ENCODE measurements at regions of chr5 and their contacts with region 1.

Region 1: GRCh38 chr5:141734501-141735230 is 52.6 kb upstream of the ARAP3 start:
- DNase-seq: peak; percentile 2
- H3K4me3 Mint-ChIP-seq: no peak overlapping the region
- H3K27ac Mint-ChIP-seq: no peak overlapping the region
- H3K4me1 Mint-ChIP-seq: no peaks in the 10 kb centered on the region
- H3K27me3 Mint-ChIP-seq: peaks cover 4% of the 10 kb centered on the region

Region 2: DNA sequence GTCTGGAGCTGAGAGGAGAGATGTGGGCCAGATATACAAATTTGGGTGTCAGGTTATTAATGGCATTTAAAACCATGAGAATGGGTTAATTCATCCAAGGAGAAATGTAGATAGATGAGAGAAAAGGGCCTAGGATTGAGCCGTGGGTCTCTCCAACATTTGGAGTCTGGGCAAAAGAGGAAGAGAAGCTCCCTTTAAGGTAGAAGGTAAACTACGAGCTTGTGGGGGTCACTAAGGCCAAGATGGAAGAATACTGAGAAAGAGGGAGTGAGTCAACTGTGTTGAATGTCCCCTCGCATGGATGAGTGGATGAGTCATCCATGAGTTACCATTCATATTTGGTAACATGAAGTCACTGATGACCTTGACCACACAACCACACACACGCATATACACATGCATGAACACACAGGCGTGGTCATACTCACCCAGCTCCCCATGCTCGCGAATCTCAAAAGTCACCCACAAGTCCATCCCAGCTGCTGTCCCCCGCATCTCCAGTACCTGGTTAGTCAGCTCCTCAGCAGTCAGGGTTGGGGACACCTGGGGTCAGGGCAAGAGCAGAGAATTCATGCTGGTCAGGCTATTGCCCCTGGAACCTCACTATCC is 76.6 kb before region 1 on chr5:
- intact Hi-C with region 1: no loop called
- DNase-seq: no peak
- H3K4me3 Mint-ChIP-seq: no peak overlapping the region
- H3K27ac Mint-ChIP-seq: no peak overlapping the region
- H3K4me1 Mint-ChIP-seq: no peaks in the 10 kb centered on the region
- H3K27me3 Mint-ChIP-seq: no peaks in the 10 kb centered on the region

Region 3: GRCh38 chr5:141757402-141757801 is 22.7 kb after region 1 on chr5:
- intact Hi-C with region 1: loop called (anchors 1 kb)
- DNase-seq: no peak
- H3K4me3 Mint-ChIP-seq: no peak overlapping the region
- H3K27ac Mint-ChIP-seq: no peak overlapping the region
- H3K4me1 Mint-ChIP-seq: no peaks in the 10 kb centered on the region
- H3K27me3 Mint-ChIP-seq: peaks cover 41% of the 10 kb centered on the region